ENCODE measurements at regions of chr16 and their contacts with region 1.

Region 1: DNA sequence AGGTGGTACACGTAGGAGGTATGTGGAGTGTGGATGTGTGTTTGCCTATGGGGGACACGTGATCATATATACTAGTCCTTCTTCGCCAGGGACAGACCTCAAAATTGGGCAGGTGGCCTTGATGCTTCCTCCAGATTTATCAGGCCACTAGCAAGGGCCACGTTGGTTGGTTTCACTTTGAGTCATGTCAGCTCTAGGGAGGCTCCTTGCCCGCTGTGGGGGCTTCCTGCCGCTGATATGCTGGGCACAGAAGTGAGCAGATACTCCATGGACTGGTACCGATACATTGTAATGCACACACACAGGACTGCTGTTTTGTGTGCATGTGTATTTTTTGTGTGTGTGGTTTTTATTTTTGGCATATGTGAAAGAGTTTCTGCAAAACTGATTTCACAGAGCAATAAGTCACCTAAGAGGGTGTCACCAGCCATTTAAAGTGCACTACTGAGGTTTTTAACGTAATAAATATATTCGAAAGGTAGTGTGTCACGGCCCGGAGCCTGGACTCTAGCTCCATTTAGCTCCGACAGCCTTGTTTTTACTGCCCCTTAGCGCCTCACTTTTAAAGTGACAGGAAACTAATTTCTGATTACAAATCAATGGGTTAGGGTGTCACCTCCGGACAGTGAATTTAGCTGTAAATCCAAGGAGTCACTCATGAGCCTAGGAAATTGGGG is 605.5 kb upstream of the SALL1 start:
- DNase-seq: no peak

Region 2: DNA sequence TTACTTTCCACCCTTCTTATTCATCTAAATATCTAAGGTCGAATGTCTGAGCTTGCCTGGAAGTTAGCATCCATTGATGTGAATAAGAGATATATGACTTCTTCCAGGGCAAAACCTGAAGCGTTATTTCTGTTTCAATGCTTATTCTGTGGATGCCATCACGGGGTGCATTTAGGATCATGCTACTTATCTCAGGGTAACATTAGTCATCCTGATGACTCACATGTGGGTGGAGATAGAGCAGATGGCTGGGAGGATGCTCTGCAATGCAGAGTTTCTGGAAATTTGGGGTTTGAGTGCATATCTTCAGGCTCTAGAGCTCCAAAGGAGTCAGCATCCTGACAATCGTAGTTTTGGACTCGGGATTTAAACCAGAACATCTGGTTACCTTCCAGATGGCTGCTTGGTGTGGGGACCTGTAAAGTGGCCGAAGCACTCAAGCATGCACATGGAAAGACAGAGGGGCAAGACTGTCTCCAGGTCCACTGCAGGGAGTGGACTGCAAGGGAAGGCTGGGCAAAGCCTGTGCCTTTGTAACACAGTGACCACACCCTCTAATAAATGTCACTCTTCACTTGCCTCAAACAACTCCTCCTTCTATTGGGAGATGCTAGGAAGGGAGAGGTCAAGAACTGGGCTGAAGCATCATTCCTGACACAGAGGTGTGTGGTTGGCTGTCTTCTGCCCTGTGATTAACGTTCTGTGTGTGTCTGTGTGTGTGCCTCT is 430.3 kb before region 1 on chr16:
- intact Hi-C with region 1: loop called (anchors 10 kb)
- DNase-seq: peak in 33 of 42 donors; percentile 9 to 88 (median 52)

Region 3: GRCh38 chr16:51651061-51651466 is 105.5 kb before region 1 on chr16:
- intact Hi-C with region 1: no loop called
- DNase-seq: peak in 39 of 42 donors; percentile 12 to 63 (median 34)

Region 4: DNA sequence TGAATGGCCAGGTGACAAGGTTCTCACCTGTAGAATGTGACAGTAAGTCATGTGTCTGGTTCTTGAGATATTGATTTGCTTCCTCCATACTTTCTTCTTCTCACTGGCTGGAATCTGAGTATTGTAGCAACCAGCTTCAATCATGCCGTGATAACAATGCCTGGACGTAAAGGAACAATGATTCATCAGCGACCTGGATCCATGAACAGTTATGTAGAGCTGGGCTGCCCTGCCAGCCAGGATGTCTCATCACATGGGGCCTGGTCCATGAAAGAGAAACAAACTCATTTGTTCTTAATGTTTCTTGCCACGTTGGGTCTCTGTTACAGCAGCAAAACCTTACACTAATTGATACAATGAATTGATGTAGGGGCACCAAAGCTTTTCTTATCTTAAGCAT is 163.2 kb after region 1 on chr16:
- intact Hi-C with region 1: no loop called
- DNase-seq: no peak

Measured in head of caudate nucleus (tissue), 42 donors.